IMR-90 (cell line): ENCODE measurements at regions of chr5 and their contacts with region 1.

Region 1: GRCh38 chr5:62460578-62460983 is 48.0 kb downstream of the IPO11 start:
- DNase-seq: peak; percentile 68
- ATAC-seq: peak; percentile 87
- H3K4me3 ChIP-seq: no peak overlapping the region
- H3K27ac ChIP-seq: no peak overlapping the region
- H3K4me1 ChIP-seq: peaks cover 2% of the 10 kb centered on the region; the same call in 1 of the 2 replicates
- H3K27me3 ChIP-seq: no peaks in the 10 kb centered on the region
- CTCF ChIP-seq: peak; percentile 82
- POLR2A ChIP-seq: no peak
- RAD21 ChIP-seq: peak; percentile 74

Region 2: DNA sequence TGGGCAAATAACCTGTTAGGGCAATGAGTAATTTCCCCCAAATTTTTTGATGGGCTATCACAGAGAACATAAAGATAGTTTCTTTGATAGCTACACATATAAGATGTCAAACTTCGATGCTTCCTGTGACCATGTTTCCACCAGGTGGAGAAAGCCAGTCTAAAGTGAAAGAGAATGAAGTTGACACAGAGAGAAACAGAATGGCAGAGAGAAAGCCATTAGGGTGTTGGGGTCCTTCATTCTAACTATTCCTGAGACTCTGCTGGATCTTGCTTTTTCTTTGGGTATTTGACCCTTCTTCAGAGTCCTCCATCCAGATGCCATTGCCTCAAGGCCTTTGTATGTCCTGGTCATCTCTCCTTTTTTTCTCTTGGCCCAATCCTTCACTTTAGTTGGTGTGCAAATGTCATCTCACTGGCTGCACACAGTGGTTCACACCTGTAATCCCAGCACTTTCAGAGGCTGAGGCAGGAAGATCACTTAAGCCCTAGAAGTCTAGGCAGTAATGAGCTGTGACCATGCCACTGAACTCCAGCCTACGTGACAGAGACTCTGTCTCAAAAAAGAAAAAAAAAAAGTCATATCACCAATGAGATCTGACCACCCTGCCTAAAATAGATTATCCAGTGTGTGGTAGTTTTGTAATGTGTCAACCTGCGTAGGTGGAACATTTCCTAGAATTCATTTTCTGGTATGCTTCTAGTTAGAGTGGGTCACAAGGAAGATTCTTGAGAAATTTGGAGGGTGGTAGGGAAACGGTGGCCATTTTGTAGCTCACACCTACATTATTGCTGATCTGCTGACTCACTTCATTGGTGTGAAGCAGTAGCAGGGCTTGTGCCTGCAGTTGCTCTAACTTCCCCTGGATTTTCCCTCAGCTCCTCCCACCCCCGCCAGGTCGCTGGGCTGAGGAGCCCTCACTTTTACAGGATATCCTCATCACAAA is 175.4 kb before region 1 on chr5:
- CTCF ChIA-PET with region 1: no interaction called
- POLR2A ChIA-PET with region 1: no interaction called
- dilution Hi-C with region 1: no loop called
- in situ Hi-C with region 1: no loop called
- intact Hi-C with region 1: no loop called
- DNase-seq: no peak
- ATAC-seq: no peak
- H3K4me3 ChIP-seq: no peak overlapping the region
- H3K27ac ChIP-seq: no peak overlapping the region
- H3K4me1 ChIP-seq: no peaks in the 10 kb centered on the region
- H3K27me3 ChIP-seq: no peaks in the 10 kb centered on the region; the same call in 1 of the 2 replicates
- CTCF ChIP-seq: no peak
- POLR2A ChIP-seq: no peak
- RAD21 ChIP-seq: no peak

Region 3: DNA sequence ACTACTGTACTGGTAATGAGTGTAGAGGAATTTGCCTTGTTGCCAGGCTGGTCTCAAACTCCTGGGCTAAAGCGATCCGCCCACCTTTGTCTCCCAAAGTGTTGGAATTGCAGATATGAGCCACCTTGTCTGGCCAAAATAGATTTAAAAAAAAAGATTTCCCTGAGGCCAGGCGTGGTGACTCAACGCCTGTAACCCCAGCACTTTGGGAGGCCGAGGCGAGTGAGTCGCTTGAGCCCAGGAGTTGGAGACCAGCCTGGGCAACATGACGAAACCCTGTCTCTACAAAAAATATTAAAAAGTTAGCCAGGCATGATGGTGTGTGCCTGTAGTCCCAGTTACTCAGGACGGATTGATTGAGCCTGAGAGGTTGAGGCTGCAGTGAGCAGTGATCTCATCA is 14.5 kb after region 1 on chr5:
- CTCF ChIA-PET with region 1: interaction called, 12 read pairs
- POLR2A ChIA-PET with region 1: no interaction called
- dilution Hi-C with region 1: no loop called
- in situ Hi-C with region 1: no loop called
- intact Hi-C with region 1: no loop called
- DNase-seq: peak; percentile 79
- ATAC-seq: peak; percentile 91
- H3K4me3 ChIP-seq: no peak overlapping the region
- H3K27ac ChIP-seq: no peak overlapping the region
- H3K4me1 ChIP-seq: peaks cover 6% of the 10 kb centered on the region
- H3K27me3 ChIP-seq: no peaks in the 10 kb centered on the region
- CTCF ChIP-seq: no peak
- POLR2A ChIP-seq: no peak
- RAD21 ChIP-seq: no peak

Region 4: DNA sequence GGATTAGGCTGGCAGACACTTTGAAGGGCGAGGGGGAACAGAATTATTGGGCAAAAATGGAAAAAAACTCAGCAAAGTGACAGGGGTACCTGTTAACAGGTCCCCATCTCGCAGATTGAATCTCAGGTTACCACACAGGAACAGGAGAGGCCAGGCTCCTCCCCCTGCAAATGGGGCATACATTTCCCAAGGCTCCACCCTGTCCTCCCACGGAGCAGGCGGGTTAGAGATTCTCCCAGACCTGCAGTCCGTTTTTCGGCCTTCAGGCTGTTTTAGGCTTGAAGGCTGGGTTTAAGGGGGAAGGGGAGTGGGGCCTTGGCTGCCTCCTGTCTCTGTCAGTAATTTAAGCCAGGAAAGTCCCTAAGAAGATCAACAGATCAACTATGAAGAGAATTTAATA is 160.7 kb after region 1 on chr5:
- CTCF ChIA-PET with region 1: no interaction called
- POLR2A ChIA-PET with region 1: no interaction called
- dilution Hi-C with region 1: no loop called
- in situ Hi-C with region 1: no loop called
- intact Hi-C with region 1: loop called (anchors 10 kb)
- DNase-seq: no peak
- ATAC-seq: no peak
- H3K4me3 ChIP-seq: no peak overlapping the region
- H3K27ac ChIP-seq: no peak overlapping the region
- H3K4me1 ChIP-seq: no peaks in the 10 kb centered on the region
- H3K27me3 ChIP-seq: no peaks in the 10 kb centered on the region
- CTCF ChIP-seq: no peak
- POLR2A ChIP-seq: no peak
- RAD21 ChIP-seq: no peak

Region 5: DNA sequence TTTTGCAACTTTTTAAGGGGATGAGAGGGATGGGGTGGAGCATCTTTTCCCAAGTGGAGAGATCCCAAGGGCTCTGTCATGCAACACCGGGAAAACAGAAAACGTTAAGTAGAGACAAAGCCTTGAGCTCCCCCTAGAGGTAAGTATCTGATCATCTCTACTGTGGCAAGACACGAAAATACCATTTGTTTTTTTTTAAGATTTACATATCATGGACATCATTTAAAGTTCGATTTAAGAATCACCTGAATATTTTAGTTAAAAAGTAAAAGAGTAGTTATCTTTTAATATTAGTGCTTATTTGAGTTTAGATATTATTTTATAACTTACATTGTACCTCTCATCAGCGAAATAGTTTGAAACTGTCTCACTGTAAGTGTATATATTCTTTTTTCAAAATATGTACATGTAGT is 318.4 kb after region 1 on chr5:
- CTCF ChIA-PET with region 1: interaction called, 11 read pairs
- POLR2A ChIA-PET with region 1: no interaction called
- dilution Hi-C with region 1: no loop called
- in situ Hi-C with region 1: loop called (anchors 5 kb)
- intact Hi-C with region 1: loop called (anchors 1 kb)
- DNase-seq: peak; percentile 60
- ATAC-seq: peak; percentile 92
- H3K4me3 ChIP-seq: no peak overlapping the region
- H3K27ac ChIP-seq: no peak overlapping the region
- H3K4me1 ChIP-seq: no peaks in the 10 kb centered on the region
- H3K27me3 ChIP-seq: no peaks in the 10 kb centered on the region
- CTCF ChIP-seq: peak; percentile 81
- POLR2A ChIP-seq: no peak
- RAD21 ChIP-seq: peak; percentile 75

Region 6: GRCh38 chr5:63963080-63963735 is 1502.6 kb after region 1 on chr5:
- CTCF ChIA-PET with region 1: interaction called, 9 read pairs
- POLR2A ChIA-PET with region 1: no interaction called
- dilution Hi-C with region 1: no loop called
- in situ Hi-C with region 1: no loop called
- intact Hi-C with region 1: loop called (anchors 1 kb)
- DNase-seq: peak; percentile 52
- ATAC-seq: peak; percentile 48
- H3K4me3 ChIP-seq: no peak overlapping the region
- H3K27ac ChIP-seq: no peak overlapping the region
- H3K4me1 ChIP-seq: no peaks in the 10 kb centered on the region
- H3K27me3 ChIP-seq: no peaks in the 10 kb centered on the region
- CTCF ChIP-seq: peak; percentile 67
- POLR2A ChIP-seq: no peak
- RAD21 ChIP-seq: peak; percentile 45